K562 (cell line): ENCODE measurements at regions of chr5 and their contacts with region 1.

Region 1: GRCh38 chr5:159316519-159317383 is 13.5 kb downstream of the IL12B start:
- DNase-seq: peak; percentile 20 to 64 (median 36)
- ATAC-seq: peak; percentile 95
- H3K4me3 ChIP-seq: no peak overlapping the region
- H3K27ac ChIP-seq: no peak overlapping the region
- H3K4me1 ChIP-seq: no peaks in the 10 kb centered on the region
- H3K27me3 ChIP-seq: peaks cover 5 to 9% of the 10 kb centered on the region in 2 experiments; a peak in 4 of 5 replicates
- CTCF ChIP-seq: peak; percentile 69 to 78 (median 72)
- EP300 ChIP-seq: no peak
- POLR2A ChIP-seq: no peak
- RAD21 ChIP-seq: peak; percentile 55 to 91

Region 2: DNA sequence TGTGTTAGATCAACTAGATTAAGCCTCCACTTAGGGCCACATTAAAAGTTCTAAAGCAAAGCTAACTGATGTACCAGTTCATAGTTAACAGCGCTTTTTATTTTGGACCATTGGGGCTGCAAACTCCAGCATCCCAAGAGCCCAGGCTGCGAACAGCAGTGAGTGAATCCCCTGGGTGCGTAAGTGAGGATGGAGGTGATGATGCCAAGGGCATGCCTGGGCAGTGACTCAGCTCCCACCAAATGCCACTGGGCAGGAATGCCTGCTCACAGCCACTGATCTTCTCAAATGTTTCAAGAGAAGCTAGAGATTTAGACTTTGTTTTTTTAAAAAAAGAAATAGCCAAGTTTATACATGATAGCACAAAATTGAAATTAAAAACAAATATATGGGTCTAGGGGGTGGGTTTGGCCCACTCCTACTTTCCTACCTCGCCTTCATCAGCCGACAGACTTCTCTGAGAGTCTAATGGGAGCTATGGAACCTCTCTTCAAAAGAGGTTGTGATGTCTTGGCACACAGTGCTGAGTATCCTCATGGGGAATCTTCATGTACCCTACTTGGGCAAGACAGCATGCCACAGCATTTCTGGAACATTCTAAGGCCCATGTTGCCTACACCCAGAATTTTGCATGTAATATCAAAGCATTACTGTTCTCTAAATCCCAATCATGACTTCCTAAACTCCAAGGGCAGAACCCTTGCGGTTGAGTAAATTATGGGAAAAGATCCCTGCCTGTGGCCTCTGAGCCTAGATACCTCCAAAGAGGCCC is 615.2 kb before region 1 on chr5:
- CTCF ChIA-PET with region 1: no interaction called
- POLR2A ChIA-PET with region 1: no interaction called
- in situ Hi-C with region 1: loop called (anchors 25 kb)
- intact Hi-C with region 1: no loop called
- DNase-seq: no peak
- ATAC-seq: no peak
- H3K4me3 ChIP-seq: no peak overlapping the region
- H3K27ac ChIP-seq: no peak overlapping the region
- H3K4me1 ChIP-seq: no peaks in the 10 kb centered on the region
- H3K27me3 ChIP-seq: no peaks in the 10 kb centered on the region; a peak in 1 of 5 replicates
- CTCF ChIP-seq: no peak
- EP300 ChIP-seq: no peak
- POLR2A ChIP-seq: no peak
- RAD21 ChIP-seq: no peak

Region 3: DNA sequence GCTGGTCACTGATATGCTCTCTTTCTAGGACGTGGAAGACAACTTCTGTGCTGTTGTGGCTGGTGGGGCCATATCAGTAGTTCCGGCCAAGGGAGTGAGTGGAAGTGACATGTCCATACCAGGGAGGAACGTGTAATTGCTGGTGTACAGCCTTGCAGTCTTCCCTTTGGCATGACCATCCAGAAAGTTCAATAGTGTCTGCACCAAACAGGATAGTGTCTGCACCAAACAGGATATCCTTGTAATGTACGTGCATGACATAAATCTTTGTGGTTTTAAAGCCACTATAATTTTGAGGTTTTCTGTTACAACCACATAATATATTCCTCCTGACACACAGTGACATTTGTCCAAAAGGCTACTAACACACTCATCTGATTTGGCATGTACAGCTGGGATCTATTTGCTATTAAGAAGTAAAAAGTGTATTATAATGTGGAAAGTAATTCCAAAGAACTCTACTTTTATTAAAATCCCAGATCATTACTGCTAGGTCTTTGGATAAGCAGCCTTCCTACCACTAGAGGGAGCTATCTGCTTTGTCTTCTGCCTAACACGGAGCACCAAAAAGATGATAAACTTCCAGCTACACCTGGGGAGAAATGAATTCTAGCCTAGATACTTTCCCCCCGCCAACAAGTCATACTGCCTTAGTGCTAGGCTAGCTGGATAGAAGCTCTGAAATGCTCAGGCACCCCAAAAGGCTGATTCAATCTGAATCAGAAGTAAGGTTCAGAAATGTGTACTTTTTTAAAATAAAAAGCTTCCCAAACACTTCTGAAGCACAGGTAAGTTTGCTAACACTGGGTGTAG is 160.1 kb before region 1 on chr5:
- CTCF ChIA-PET with region 1: interaction called, 29 read pairs
- POLR2A ChIA-PET with region 1: no interaction called
- in situ Hi-C with region 1: loop called (anchors 5 kb)
- intact Hi-C with region 1: loop called (anchors 1 kb)
- DNase-seq: peak; percentile 71 to 80 (median 72)
- ATAC-seq: peak; percentile 97
- H3K4me3 ChIP-seq: no peak overlapping the region
- H3K27ac ChIP-seq: no peak overlapping the region
- H3K4me1 ChIP-seq: no peaks in the 10 kb centered on the region
- H3K27me3 ChIP-seq: no peaks in the 10 kb centered on the region
- CTCF ChIP-seq: peak; percentile 66 to 87 (median 76); a peak in 5 of 6 replicates
- EP300 ChIP-seq: no peak
- POLR2A ChIP-seq: no peak
- RAD21 ChIP-seq: peak; percentile 86 to 91

Region 4: GRCh38 chr5:159286420-159287035 is 30.2 kb before region 1 on chr5:
- CTCF ChIA-PET with region 1: interaction called, 19 read pairs
- POLR2A ChIA-PET with region 1: no interaction called
- in situ Hi-C with region 1: no loop called
- intact Hi-C with region 1: loop called (anchors 2 kb)
- DNase-seq: peak in 1 of 4 experiments; percentile 40
- ATAC-seq: peak; percentile 84
- H3K4me3 ChIP-seq: no peak overlapping the region
- H3K27ac ChIP-seq: no peak overlapping the region
- H3K4me1 ChIP-seq: no peaks in the 10 kb centered on the region
- H3K27me3 ChIP-seq: no peaks in the 10 kb centered on the region
- CTCF ChIP-seq: peak; percentile 11 to 64 (median 46); a peak in 4 of 6 replicates
- EP300 ChIP-seq: no peak
- POLR2A ChIP-seq: no peak
- RAD21 ChIP-seq: peak; percentile 74 to 75

Region 5: DNA sequence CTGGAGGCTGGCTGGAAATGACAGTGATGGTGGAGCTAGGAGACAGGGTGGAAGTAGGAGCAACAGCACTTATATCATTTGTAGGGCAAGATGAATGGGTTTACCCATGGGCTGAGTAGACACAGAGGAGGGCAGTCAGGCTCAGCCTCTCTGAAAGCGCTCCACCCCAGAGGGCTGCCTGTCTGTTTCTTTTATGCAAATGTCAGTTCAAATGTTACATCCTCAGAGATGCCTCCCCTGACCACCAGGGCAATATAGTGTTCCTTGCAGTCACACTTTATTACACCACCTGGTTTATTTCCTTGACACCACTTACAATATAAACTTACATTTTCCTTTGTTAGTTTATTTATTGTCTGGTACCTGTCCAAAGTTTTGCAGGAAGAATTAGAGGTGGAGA is 173.0 kb after region 1 on chr5:
- CTCF ChIA-PET with region 1: no interaction called
- POLR2A ChIA-PET with region 1: no interaction called
- in situ Hi-C with region 1: no loop called
- intact Hi-C with region 1: no loop called
- DNase-seq: no peak
- ATAC-seq: no peak
- H3K4me3 ChIP-seq: no peak overlapping the region
- H3K27ac ChIP-seq: no peak overlapping the region
- H3K4me1 ChIP-seq: no peaks in the 10 kb centered on the region
- H3K27me3 ChIP-seq: no peaks in the 10 kb centered on the region
- CTCF ChIP-seq: no peak
- EP300 ChIP-seq: no peak
- POLR2A ChIP-seq: no peak
- RAD21 ChIP-seq: no peak